GM12878 (cell line): ENCODE measurements at regions of chr14 and their contacts with region 1.

Region 1: GRCh38 chr14:20970983-20971704 is 15.9 kb downstream of the RNASE2 start:
- DNase-seq: peak; percentile 9
- ATAC-seq: peak; percentile 98
- H3K4me3 ChIP-seq: peak overlapping the region; percentile 60
- H3K27ac ChIP-seq: no peak overlapping the region
- H3K4me1 ChIP-seq: no peaks in the 10 kb centered on the region
- H3K27me3 ChIP-seq: no peaks in the 10 kb centered on the region; a peak in 1 of 4 replicates
- CTCF ChIP-seq: peak; percentile 87 to 98 (median 90)
- EP300 ChIP-seq: no peak
- POLR2A ChIP-seq: no peak
- RAD21 ChIP-seq: peak; percentile 49

Region 2: GRCh38 chr14:20956376-20956976 is 14.7 kb before region 1 on chr14:
- CTCF ChIA-PET with region 1: interaction called, 11 read pairs
- POLR2A ChIA-PET with region 1: no interaction called
- RAD21 ChIA-PET with region 1: interaction called, 3 read pairs
- SMC1A ChIA-PET with region 1: no interaction called
- in situ Hi-C with region 1: no loop called
- intact Hi-C with region 1: no loop called
- DNase-seq: no peak
- ATAC-seq: no peak
- H3K4me3 ChIP-seq: no peak overlapping the region
- H3K27ac ChIP-seq: no peak overlapping the region
- H3K4me1 ChIP-seq: no peaks in the 10 kb centered on the region
- H3K27me3 ChIP-seq: peaks cover 0 to 2% of the 10 kb centered on the region in 2 experiments; a peak in 2 of 4 replicates
- CTCF ChIP-seq: no peak
- EP300 ChIP-seq: no peak
- POLR2A ChIP-seq: no peak
- RAD21 ChIP-seq: no peak

Region 3: DNA sequence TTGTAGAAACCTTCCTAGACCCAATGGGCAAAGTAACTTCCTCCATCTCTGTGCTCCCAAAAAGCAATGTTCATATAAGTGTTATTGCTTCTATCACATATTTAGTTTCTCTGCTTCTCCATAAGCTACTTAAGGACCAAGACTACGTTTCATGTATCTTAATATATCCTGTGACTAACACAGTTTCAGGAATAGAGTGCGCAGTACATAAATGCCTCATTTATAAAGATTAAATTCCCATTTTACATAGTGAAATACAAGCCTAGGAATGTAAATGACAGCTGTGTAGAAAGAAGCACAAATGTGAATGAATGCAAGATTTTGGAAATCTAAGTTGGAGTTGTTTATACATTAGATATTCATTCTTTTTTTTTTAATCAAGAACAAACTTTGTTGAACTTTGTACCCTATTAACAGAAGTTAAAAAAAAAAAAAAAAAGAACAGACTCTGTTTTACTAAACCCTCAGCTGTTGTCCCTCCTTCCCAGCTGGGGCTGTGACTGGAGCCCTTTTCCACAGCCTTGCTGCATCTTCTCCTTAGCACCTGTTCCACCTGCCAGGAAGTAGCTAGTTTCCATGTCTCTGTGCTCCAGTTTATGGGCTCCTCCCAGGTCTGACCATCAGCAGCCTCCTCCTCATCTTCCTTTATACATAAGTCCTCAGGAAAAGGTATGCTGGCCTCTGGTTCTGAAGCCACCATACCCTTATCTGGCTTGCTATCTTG is 11.7 kb after region 1 on chr14:
- CTCF ChIA-PET with region 1: interaction called, 13 read pairs
- POLR2A ChIA-PET with region 1: no interaction called
- RAD21 ChIA-PET with region 1: no interaction called
- SMC1A ChIA-PET with region 1: no interaction called
- in situ Hi-C with region 1: no loop called
- intact Hi-C with region 1: no loop called
- DNase-seq: no peak
- ATAC-seq: no peak
- H3K4me3 ChIP-seq: no peak overlapping the region
- H3K27ac ChIP-seq: no peak overlapping the region
- H3K4me1 ChIP-seq: no peaks in the 10 kb centered on the region
- H3K27me3 ChIP-seq: no peaks in the 10 kb centered on the region
- CTCF ChIP-seq: no peak
- EP300 ChIP-seq: no peak
- POLR2A ChIP-seq: no peak
- RAD21 ChIP-seq: no peak